Right cardiac atrium (tissue), 5 donors: ENCODE measurements at regions of chr6 and their contacts with region 1.

Region 1: GRCh38 chr6:168884646-168885086 is 369.0 kb downstream of the THBS2 start:
- DNase-seq: peak; percentile 63 to 93 (median 92)
- ATAC-seq: peak; percentile 88 to 89
- H3K4me3 ChIP-seq: no peak overlapping the region
- H3K27ac ChIP-seq: no peak overlapping the region
- H3K4me1 ChIP-seq: no peaks in the 10 kb centered on the region
- H3K27me3 ChIP-seq: no peaks in the 10 kb centered on the region

Region 2: DNA sequence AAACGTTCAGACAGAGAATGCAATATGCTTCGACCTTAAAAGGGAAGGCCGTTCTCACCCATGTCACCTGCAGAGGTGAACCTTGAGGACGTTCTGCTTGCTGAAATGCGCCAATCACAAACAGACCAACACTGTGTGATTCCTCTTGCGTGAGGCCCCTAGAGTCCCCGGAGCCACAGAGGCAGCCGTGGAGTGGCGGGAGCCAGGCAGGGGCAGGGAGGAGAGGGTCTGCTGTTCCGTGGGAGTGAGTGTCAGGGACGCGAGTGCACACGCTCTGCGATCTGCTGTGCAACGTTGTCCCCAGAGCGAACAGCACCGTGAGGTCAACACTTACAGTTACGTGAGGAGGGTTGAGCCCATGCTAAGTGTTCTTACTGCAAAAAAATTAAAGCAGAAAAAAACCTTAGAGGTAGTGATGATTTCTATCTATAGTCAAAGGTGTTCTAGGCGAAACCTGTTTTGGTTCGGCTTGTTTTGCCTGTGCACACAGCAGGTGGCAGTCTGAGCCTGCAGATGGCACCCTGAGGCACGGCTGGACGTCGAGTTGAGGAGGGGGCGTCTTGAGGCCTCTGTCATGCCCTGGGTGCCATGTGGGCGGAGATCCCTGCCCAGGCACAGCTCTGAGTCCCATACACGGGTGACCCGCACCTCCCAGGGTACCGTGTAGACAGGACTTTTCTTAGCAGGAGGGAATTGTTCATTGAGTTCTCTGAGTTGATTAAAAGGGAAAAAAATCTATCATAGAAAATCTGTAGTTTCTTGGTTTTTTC is 733.9 kb before region 1 on chr6:
- intact Hi-C with region 1: loop called in 1 of 4 experiments (anchors 5 kb)
- DNase-seq: no peak
- ATAC-seq: peak in 1 of 2 donors; percentile 49
- H3K4me3 ChIP-seq: no peak overlapping the region
- H3K27ac ChIP-seq: no peak overlapping the region
- H3K4me1 ChIP-seq: no peaks in the 10 kb centered on the region
- H3K27me3 ChIP-seq: no peaks in the 10 kb centered on the region

Region 3: GRCh38 chr6:168370310-168370991 is 514.2 kb before region 1 on chr6:
- intact Hi-C with region 1: loop called (anchors 2 to 5 kb)
- DNase-seq: peak; percentile 72 to 92 (median 89)
- ATAC-seq: peak; percentile 82 to 85
- H3K4me3 ChIP-seq: no peak overlapping the region
- H3K27ac ChIP-seq: no peak overlapping the region
- H3K4me1 ChIP-seq: no peaks in the 10 kb centered on the region
- H3K27me3 ChIP-seq: no peaks in the 10 kb centered on the region

Region 4: GRCh38 chr6:168559574-168560098 is 325.0 kb before region 1 on chr6:
- intact Hi-C with region 1: no loop called
- DNase-seq: no peak
- ATAC-seq: peak; percentile 51 to 56
- H3K4me3 ChIP-seq: no peak overlapping the region
- H3K27ac ChIP-seq: no peak overlapping the region
- H3K4me1 ChIP-seq: no peaks in the 10 kb centered on the region
- H3K27me3 ChIP-seq: no peaks in the 10 kb centered on the region

Region 5: DNA sequence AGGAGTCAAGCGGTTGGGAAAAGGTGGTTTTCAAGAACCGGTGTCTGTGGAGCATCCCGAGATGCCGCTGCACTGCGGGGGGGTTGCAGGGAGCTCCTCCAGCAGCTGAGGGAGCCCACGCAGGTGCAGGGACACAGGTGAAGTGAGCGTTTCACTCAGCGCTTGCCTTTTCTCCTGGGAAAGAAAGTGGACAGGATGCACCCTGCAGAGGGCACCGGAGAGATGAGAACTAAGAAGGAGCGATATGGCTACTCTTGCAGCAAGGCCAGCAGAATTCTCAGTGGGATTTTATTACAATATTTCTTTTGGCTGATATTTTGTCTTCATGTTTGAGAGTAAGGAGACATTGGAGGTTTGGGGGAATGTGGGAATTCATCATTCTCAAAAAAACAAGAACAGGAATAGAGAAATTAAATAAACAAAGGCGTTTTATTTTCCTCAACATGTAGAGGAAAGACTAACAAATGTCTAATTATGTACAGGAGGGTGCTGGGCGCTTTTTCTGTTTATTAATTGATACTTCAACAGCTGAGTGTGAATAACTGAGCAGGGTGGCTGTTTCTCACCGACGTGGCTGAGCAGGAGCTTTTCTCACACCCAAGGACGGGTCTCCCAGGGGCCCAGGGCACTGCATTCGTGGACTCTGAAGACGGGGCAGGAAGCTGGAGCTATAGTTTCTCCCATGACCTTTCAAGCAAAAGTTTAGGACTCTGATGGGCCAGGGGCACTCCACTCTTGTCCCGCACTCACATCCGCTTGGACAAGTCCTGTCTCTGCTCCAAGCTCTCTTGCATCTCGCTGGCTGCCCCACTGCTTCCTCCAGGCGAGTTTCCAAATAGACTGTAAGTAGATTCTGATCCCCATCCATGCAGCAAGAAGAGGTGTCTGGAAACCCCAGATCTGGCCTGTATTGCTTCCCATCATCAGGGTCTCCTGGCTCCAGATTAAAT is 267.6 kb before region 1 on chr6:
- intact Hi-C with region 1: loop called in 1 of 4 experiments (anchors 5 kb)
- DNase-seq: peak in 2 of 3 donors; percentile 70 to 72
- ATAC-seq: peak; percentile 35 to 77
- H3K4me3 ChIP-seq: no peak overlapping the region
- H3K27ac ChIP-seq: no peak overlapping the region
- H3K4me1 ChIP-seq: no peaks in the 10 kb centered on the region
- H3K27me3 ChIP-seq: no peaks in the 10 kb centered on the region